PC-9 (cell line): ENCODE measurements at regions of chr17 and their contacts with region 1.

Region 1: GRCh38 chr17:11644261-11645212 is 46.3 kb downstream of the DNAH9 start:
- DNase-seq: peak in 1 of 2 experiments; percentile 34
- H3K4me3 ChIP-seq: no peak overlapping the region
- H3K27ac ChIP-seq: no peak overlapping the region
- H3K4me1 ChIP-seq: no peaks in the 10 kb centered on the region
- H3K27me3 ChIP-seq: no peaks in the 10 kb centered on the region
- CTCF ChIP-seq: peak; percentile 73

Region 2: GRCh38 chr17:11551442-11551841 is 93.1 kb before region 1 on chr17:
- CTCF ChIA-PET with region 1: no interaction called
- POLR2A ChIA-PET with region 1: no interaction called
- intact Hi-C with region 1: no loop called
- DNase-seq: no peak
- H3K4me3 ChIP-seq: no peak overlapping the region
- H3K27ac ChIP-seq: no peak overlapping the region
- H3K4me1 ChIP-seq: no peaks in the 10 kb centered on the region
- H3K27me3 ChIP-seq: no peaks in the 10 kb centered on the region
- CTCF ChIP-seq: no peak

Region 3: GRCh38 chr17:11608396-11608795 is 36.1 kb before region 1 on chr17:
- CTCF ChIA-PET with region 1: interaction called, 13 read pairs
- POLR2A ChIA-PET with region 1: no interaction called
- intact Hi-C with region 1: no loop called
- DNase-seq: no peak
- H3K4me3 ChIP-seq: no peak overlapping the region
- H3K27ac ChIP-seq: no peak overlapping the region
- H3K4me1 ChIP-seq: no peaks in the 10 kb centered on the region
- H3K27me3 ChIP-seq: peaks cover 5% of the 10 kb centered on the region; the same call in 1 of the 2 replicates
- CTCF ChIP-seq: no peak